ENCODE measurements at regions of chr9 and their contacts with region 1.

Region 1: GRCh38 chr9:71384352-71384751 is 262.9 kb upstream of the TRPM3 start:
- DNase-seq: no peak
- H3K4me3 Mint-ChIP-seq: no peak overlapping the region
- H3K27ac Mint-ChIP-seq: no peak overlapping the region
- H3K4me1 Mint-ChIP-seq: no peaks in the 10 kb centered on the region
- H3K27me3 Mint-ChIP-seq: no peaks in the 10 kb centered on the region
- CTCF ChIP-seq: no peak

Region 2: GRCh38 chr9:71210326-71210725 is 174.0 kb before region 1 on chr9:
- CTCF ChIA-PET with region 1: no interaction called
- intact Hi-C with region 1: no loop called
- DNase-seq: no peak
- H3K4me3 Mint-ChIP-seq: no peak overlapping the region
- H3K27ac Mint-ChIP-seq: no peak overlapping the region
- H3K4me1 Mint-ChIP-seq: no peaks in the 10 kb centered on the region
- H3K27me3 Mint-ChIP-seq: no peaks in the 10 kb centered on the region
- CTCF ChIP-seq: no peak

Region 3: DNA sequence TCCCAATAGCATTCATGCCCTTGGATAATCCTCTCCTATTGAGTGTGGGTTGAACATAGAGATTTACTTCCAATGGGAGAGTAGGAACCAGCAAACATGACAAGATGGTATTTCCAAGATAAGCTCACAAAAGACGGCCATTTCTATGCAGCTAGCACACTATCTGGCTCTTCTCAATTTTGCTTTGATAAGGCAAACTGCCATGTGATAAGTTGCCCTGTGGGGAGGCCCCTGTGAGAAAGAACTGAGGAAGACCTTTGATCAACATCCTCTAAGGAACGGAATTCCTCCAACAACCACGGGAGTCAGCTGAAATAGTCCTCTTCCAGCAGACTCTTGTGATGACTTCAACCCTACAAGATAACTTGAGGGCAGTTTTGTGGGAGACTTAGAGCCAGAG is 51.0 kb before region 1 on chr9:
- CTCF ChIA-PET with region 1: no interaction called
- intact Hi-C with region 1: loop called (anchors 5 kb)
- DNase-seq: no peak
- H3K4me3 Mint-ChIP-seq: no peak overlapping the region
- H3K27ac Mint-ChIP-seq: no peak overlapping the region
- H3K4me1 Mint-ChIP-seq: no peaks in the 10 kb centered on the region
- H3K27me3 Mint-ChIP-seq: peaks cover 50% of the 10 kb centered on the region
- CTCF ChIP-seq: no peak

Region 4: DNA sequence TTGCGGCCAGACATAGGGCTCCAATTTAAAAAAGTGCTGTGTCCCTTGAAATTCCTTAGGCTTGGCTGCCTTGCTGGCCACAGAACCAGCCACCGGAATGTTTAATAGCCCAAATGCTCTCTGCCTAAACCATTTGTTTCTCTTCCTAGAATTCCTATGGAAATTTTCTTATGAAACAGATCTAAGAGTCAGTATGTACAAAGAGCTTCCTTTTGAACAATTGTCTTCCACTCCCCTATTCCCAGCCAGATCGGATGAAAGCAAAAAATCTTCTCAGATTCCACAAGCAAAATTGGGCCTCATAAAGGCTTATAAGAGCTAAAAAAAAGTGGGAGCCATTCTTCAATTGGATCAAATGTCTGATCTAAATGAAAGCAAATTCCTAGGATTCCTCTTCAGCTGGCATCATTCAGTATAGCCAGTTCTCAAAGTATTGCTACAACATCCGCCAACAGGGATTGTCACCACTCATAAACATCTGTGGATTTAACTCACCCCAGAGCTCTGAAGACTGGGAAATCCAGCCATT is 279.6 kb after region 1 on chr9:
- CTCF ChIA-PET with region 1: no interaction called
- intact Hi-C with region 1: no loop called
- DNase-seq: no peak
- H3K4me3 Mint-ChIP-seq: no peak overlapping the region
- H3K27ac Mint-ChIP-seq: no peak overlapping the region
- H3K4me1 Mint-ChIP-seq: no peaks in the 10 kb centered on the region
- H3K27me3 Mint-ChIP-seq: no peaks in the 10 kb centered on the region
- CTCF ChIP-seq: no peak

Measured in Calu3 (cell line).